Right ventricle myocardium inferior (tissue), 1 donor: ENCODE measurements at regions of chr3 and their contacts with region 1.

Region 1: DNA sequence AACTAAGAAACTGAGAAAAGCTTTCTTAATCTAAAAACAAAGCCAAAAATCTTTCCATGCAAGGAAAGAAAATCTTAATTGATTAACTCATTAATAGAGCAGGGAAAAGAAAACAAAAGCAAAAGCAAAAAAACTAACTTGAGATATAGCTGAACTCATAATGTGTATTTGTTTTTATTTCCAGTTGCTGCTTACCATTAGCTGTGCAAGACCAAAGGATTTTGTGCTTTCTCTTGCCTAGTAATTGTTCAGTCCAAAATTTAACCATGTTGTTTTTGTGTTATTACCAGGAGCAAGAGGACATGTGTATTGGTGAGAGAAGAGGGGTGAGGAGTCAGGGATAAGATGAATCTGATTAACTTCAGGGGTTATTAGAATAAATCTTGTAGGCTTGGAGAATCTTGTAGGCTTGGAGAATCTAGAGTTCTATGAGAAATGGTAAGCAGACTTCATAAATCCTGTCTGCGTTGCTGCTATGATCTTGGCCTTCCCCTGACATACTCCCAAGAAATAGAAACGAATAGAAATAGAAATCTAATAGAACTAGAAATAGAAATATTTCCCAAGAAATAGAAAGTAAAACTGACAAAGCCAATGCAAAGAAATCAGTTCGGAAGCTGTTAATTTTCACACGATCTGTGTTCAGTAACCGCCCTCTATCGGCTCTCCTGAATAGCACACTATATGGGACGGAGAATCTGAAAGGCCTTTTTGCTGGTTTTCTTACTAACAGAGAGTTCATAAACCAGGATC is 72.6 kb upstream of the TNFSF10 start:
- DNase-seq: no peak
- ATAC-seq: peak; percentile 73

Region 2: GRCh38 chr3:172522871-172523818 is 72.7 kb before region 1 on chr3 and contains the start of gene TNFSF10:
- intact Hi-C with region 1: loop called (anchors 2 kb)
- DNase-seq: peak; percentile 72
- ATAC-seq: peak; percentile 91
- total RNA-seq, gene TNFSF10: 15.7 TPM